Activated CD8-positive, alpha-beta T cell treated with anti-CD3 and anti-CD28 coated beads for 36 hours (primary cell): ENCODE measurements at regions of chr6 and their contacts with region 1.

Region 1: GRCh38 chr6:79949233-79949632 is 1.9 kb upstream of the ELOVL4 start:
- DNase-seq: peak; percentile 90
- ATAC-seq: peak; percentile 22
- H3K4me3 Mint-ChIP-seq: no peak overlapping the region
- H3K27ac Mint-ChIP-seq: no peak overlapping the region
- H3K4me1 Mint-ChIP-seq: peaks cover 23% of the 10 kb centered on the region
- H3K27me3 Mint-ChIP-seq: peaks cover 5% of the 10 kb centered on the region
- CTCF ChIP-seq: peak; percentile 87

Region 2: DNA sequence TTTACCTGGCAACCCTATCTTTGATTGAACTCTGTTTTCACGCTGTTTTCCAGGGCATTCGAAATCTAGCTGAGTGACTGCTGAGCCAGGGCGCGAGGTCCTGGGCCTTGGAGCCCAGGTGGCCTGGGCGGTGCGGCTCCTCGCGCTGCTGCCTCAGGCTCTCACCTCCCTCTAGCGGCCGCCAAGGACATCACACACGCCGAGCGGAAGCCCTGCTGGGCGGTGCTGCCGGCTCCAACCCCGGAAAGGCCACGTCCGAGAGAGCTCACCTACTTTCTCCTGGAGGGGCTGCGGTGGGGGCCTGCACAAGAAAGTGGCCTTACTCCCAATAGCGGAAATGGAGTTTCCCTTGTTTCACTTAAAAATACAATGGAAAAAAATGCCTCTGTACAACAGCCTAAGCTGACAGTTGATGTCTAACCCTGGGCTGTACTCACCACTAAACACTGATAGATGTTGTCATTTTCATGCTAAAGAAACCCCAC is 79.6 kb before region 1 on chr6:
- CTCF ChIA-PET with region 1: interaction called, 14 read pairs
- POLR2A ChIA-PET with region 1: no interaction called
- intact Hi-C with region 1: no loop called
- DNase-seq: peak; percentile 84
- ATAC-seq: peak; percentile 100
- H3K4me3 Mint-ChIP-seq: peak overlapping the region; percentile 12
- H3K27ac Mint-ChIP-seq: peak overlapping the region; percentile 47
- H3K4me1 Mint-ChIP-seq: peaks cover 9% of the 10 kb centered on the region
- H3K27me3 Mint-ChIP-seq: peaks cover 4% of the 10 kb centered on the region
- CTCF ChIP-seq: peak; percentile 79

Region 3: DNA sequence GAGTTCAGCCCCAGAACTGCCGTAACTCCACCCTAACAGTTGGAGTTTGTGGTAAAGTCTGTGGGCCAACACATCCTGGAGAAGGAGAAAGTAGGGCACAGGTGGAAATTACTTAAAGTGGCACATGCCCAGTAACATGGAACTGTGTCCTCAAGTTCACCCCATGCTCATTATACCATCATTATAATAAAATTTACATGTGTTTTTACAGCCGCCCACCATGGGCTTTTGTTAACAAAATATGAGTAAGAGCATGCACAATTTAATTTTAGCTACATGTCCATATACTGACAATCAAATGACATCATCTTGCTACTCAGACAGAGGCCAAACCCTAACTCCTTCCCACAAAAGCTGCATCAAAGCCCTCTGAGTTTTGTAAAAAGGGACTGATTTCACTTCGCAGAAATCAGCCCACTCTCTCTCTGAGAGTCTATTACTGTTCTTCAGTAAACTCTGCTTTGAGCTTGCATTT is 15.4 kb after region 1 on chr6:
- CTCF ChIA-PET with region 1: interaction called, 12 read pairs
- POLR2A ChIA-PET with region 1: no interaction called
- intact Hi-C with region 1: no loop called
- DNase-seq: peak; percentile 40
- ATAC-seq: peak; percentile 92
- H3K4me3 Mint-ChIP-seq: no peak overlapping the region
- H3K27ac Mint-ChIP-seq: no peak overlapping the region
- H3K4me1 Mint-ChIP-seq: peaks cover 9% of the 10 kb centered on the region
- H3K27me3 Mint-ChIP-seq: peaks cover 1% of the 10 kb centered on the region
- CTCF ChIP-seq: no peak

Region 4: GRCh38 chr6:79993012-79993910 is 44.0 kb after region 1 on chr6:
- CTCF ChIA-PET with region 1: interaction called, 12 read pairs
- POLR2A ChIA-PET with region 1: no interaction called
- intact Hi-C with region 1: no loop called
- DNase-seq: no peak
- ATAC-seq: no peak
- H3K4me3 Mint-ChIP-seq: no peak overlapping the region
- H3K27ac Mint-ChIP-seq: no peak overlapping the region
- H3K4me1 Mint-ChIP-seq: no peaks in the 10 kb centered on the region
- H3K27me3 Mint-ChIP-seq: no peaks in the 10 kb centered on the region
- CTCF ChIP-seq: no peak

Region 5: GRCh38 chr6:80029470-80029869 is 80.2 kb after region 1 on chr6:
- CTCF ChIA-PET with region 1: interaction called, 15 read pairs
- POLR2A ChIA-PET with region 1: no interaction called
- intact Hi-C with region 1: no loop called
- DNase-seq: no peak
- ATAC-seq: no peak
- H3K4me3 Mint-ChIP-seq: no peak overlapping the region
- H3K27ac Mint-ChIP-seq: no peak overlapping the region
- H3K4me1 Mint-ChIP-seq: no peaks in the 10 kb centered on the region
- H3K27me3 Mint-ChIP-seq: no peaks in the 10 kb centered on the region
- CTCF ChIP-seq: no peak

Region 6: GRCh38 chr6:80106418-80107235 is 157.4 kb after region 1 on chr6 and contains the start of gene BCKDHB:
- CTCF ChIA-PET with region 1: interaction called, 12 read pairs
- POLR2A ChIA-PET with region 1: interaction called, 3 read pairs
- intact Hi-C with region 1: no loop called
- DNase-seq: peak; percentile 98
- ATAC-seq: peak; percentile 98
- H3K4me3 Mint-ChIP-seq: peak within 1 kb of the TSS; percentile 79
- H3K27ac Mint-ChIP-seq: peak within 1 kb of the TSS; percentile 92
- H3K4me1 Mint-ChIP-seq: peaks cover 16% of the 10 kb centered on the region
- H3K27me3 Mint-ChIP-seq: peaks cover 9% of the 10 kb centered on the region
- CTCF ChIP-seq: no peak
- total RNA-seq, gene BCKDHB: 17.8 to 19.3 TPM